Tibial artery (tissue), 4 donors: ENCODE measurements at regions of chr21 and their contacts with region 1.

Region 1: DNA sequence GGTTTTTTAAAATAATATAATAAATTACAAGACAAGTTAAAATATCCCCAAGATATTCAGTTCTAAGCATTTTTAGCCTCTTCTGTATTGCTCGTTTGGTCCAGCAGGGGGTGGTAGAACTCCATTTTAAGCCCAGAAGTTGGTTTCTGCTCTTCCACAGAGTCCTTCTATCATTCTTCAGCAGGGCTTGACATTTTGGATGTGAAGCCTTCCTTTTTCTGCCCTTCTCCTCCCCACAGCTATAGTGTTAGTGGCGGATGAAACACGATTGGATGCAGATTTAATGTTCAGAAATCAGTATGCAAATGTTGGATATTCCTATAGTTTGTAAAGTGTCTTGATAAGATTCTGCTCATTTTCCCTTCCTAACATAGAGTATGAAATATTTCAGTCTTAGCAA is 1.4 kb downstream of the NCAM2 start:
- DNase-seq: no peak
- H3K4me3 ChIP-seq: no peak overlapping the region
- H3K27ac ChIP-seq: no peak overlapping the region
- H3K4me1 ChIP-seq: peaks cover 0 to 25% (median 14%) of the 10 kb centered on the region in 4 donors
- H3K27me3 ChIP-seq: peaks cover 0 to 12% of the 10 kb centered on the region in 2 donors
- CTCF ChIP-seq: peak; percentile 55 to 61

Region 2: DNA sequence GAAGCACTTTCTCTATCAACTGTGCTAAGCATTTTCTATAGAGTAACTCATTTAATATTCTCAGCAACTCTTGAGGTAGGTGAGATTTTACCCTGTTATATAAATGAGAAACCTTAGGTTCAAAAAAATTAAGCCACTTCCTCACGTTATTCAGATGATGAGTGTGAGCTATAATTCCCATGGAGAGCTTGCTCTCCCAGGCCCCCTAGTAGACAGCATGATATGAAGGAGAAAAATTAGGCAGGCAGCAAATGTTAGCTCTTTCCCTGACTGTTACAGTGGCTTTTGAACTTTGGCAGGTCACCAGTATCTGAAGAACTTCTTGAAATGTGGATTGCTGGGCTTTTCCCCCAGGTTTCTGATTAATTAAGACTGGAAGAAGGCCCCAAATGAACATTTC is 751.6 kb after region 1 on chr21:
- intact Hi-C with region 1: loop called (anchors 5 kb)
- DNase-seq: no peak
- H3K4me3 ChIP-seq: no peak overlapping the region
- H3K27ac ChIP-seq: no peak overlapping the region
- H3K4me1 ChIP-seq: no peaks in the 10 kb centered on the region
- H3K27me3 ChIP-seq: no peaks in the 10 kb centered on the region
- CTCF ChIP-seq: no peak